Heart right ventricle (tissue), 16 donors: ENCODE measurements at regions of chr7 and their contacts with region 1.

Region 1: DNA sequence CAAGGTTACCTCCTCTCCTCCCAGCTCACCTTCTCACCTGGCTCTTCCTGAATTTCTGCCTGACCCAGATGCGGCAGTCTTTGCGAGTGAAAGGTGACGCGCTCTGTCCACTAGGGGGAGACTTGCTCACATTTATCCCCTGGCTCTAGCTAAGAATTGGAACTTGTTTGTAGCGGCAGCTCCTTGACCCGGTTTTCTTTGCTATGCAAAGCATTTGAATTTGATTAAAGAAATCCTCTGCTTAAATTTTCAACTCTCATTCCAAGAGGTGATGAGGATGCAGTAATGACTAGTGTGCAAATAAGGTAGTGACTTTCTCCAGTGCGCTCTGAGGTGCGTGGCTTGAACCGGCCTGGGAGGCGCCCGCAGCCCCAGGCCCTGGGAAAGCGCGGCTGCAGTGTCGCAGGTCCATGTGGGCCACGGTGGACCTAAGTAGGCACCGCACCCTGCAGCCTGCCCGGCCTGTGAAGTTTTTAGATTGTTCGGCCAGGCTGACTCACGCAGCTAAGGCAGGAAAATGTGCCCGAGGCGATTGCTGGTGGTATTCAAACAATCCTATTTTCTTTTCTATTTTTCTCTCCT is 336.9 kb upstream of the NPSR1 start:
- DNase-seq: peak; percentile 11 to 27
- ATAC-seq: peak; percentile 58 to 85 (median 72)
- H3K4me3 ChIP-seq: peak overlapping the region in 6 of 10 donors; percentile 7 to 28 (median 18)
- H3K27ac ChIP-seq: no peak overlapping the region
- H3K4me1 ChIP-seq: peaks cover 0 to 6% (median 0%) of the 10 kb centered on the region in 9 donors
- H3K27me3 ChIP-seq: peaks cover 0 to 17% (median 0%) of the 10 kb centered on the region in 7 donors
- CTCF ChIP-seq: peak; percentile 47 to 86 (median 79)

Region 2: DNA sequence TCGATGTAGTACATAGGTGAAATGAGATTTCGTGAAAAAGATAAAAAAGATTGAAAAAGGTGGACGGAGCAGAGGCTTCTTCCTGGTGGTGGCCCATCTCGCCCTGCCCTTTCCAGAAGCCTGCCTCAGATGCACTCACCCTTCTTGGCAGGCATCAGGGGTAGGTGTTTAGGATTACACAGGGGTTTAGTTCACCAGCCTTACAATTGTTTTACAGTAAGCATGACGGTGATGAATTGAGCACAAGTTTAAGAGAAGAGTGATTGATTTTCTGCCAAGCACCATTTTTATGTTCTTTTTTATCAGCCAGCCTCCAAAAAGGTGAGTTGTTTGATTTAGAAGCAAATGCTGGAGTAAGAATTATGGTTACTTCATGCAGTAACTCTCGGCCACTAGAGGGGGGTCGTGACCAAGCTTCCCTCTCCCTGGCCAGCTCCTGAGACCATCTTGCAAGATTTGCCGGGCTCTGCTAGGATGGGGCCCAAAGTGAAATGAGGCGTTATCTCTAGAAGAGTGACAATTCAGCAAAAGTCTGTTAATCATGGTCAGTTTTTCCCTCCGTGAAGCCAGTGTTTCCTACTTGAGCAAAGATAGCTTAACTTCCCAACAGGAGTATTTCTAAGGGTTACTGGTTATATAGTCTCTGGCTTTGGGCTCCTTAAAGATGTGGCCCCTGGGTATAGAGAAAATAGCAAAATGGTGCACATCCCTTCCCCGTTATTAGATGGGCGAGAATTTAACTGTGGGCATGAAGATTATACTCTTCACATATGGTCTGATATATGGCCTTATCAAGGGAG is 186.9 kb before region 1 on chr7:
- intact Hi-C with region 1: loop called in 1 of 10 experiments (anchors 5 kb)
- DNase-seq: peak; percentile 55 to 56
- ATAC-seq: peak in 7 of 8 donors; percentile 61 to 75 (median 66)
- H3K4me3 ChIP-seq: no peak overlapping the region
- H3K27ac ChIP-seq: no peak overlapping the region
- H3K4me1 ChIP-seq: peaks cover 0 to 3% (median 0%) of the 10 kb centered on the region in 9 donors
- H3K27me3 ChIP-seq: no peaks in the 10 kb centered on the region
- CTCF ChIP-seq: peak; percentile 40 to 74 (median 69)

Region 3: GRCh38 chr7:34260279-34260678 is 60.8 kb before region 1 on chr7:
- intact Hi-C with region 1: no loop called
- DNase-seq: no peak
- ATAC-seq: peak in 2 of 8 donors; percentile 46 to 92
- H3K4me3 ChIP-seq: no peak overlapping the region
- H3K27ac ChIP-seq: no peak overlapping the region
- H3K4me1 ChIP-seq: no peaks in the 10 kb centered on the region
- H3K27me3 ChIP-seq: no peaks in the 10 kb centered on the region
- CTCF ChIP-seq: no peak

Region 4: DNA sequence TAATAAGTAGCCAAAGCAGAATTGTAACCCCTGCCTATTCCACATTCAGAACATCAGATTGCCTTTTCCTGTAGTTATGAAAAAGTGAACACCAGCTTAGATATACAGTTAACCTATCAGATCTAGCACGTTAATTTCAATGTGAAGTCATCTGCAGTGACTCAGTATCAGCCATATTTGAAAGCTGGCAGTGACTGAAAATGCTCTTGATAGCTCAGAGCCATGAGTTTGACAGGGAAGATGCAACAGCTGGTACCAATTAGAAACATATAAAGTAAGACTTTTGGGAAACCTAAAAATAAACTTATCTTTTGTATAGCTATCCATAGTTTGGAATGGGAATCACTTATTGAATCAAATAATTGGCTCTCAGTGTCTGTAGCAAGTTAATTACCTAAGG is 52.8 kb after region 1 on chr7:
- intact Hi-C with region 1: no loop called
- DNase-seq: no peak
- ATAC-seq: no peak
- H3K4me3 ChIP-seq: no peak overlapping the region
- H3K27ac ChIP-seq: no peak overlapping the region
- H3K4me1 ChIP-seq: no peaks in the 10 kb centered on the region
- H3K27me3 ChIP-seq: no peaks in the 10 kb centered on the region
- CTCF ChIP-seq: no peak

Region 5: GRCh38 chr7:34425187-34425586 is 104.1 kb after region 1 on chr7:
- intact Hi-C with region 1: loop called in 4 of 10 experiments (anchors 5 to 10 kb)
- DNase-seq: no peak
- ATAC-seq: no peak
- H3K4me3 ChIP-seq: no peak overlapping the region
- H3K27ac ChIP-seq: no peak overlapping the region
- H3K4me1 ChIP-seq: no peaks in the 10 kb centered on the region
- H3K27me3 ChIP-seq: peaks cover 0 to 7% (median 0%) of the 10 kb centered on the region in 7 donors
- CTCF ChIP-seq: no peak

Region 6: DNA sequence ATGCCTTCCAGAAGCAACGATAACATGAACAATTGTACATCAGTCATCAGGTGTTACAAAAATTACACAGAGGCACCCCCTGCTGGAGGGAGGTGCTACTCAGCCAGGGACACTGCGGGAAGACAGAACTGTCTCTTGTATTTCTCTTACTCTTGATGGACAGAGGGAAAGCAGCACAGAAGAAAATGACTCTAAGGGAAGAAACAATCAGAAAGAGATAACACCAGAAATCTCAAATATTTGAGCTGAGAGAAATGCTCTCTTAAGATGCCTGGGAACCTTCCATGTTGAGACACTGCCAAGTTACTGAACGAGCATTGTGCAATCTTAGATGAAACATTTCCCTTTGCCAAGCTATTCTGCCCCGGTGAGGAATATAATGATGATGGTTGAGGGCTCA is 109.4 kb after region 1 on chr7:
- intact Hi-C with region 1: loop called in 4 of 10 experiments (anchors 5 to 10 kb)
- DNase-seq: peak in 1 of 2 donors; percentile 23
- ATAC-seq: peak in 1 of 8 donors; percentile 35
- H3K4me3 ChIP-seq: no peak overlapping the region
- H3K27ac ChIP-seq: no peak overlapping the region
- H3K4me1 ChIP-seq: no peaks in the 10 kb centered on the region
- H3K27me3 ChIP-seq: peaks cover 0 to 3% (median 0%) of the 10 kb centered on the region in 7 donors
- CTCF ChIP-seq: peak in 7 of 9 donors; percentile 5 to 54 (median 43)

Region 7: DNA sequence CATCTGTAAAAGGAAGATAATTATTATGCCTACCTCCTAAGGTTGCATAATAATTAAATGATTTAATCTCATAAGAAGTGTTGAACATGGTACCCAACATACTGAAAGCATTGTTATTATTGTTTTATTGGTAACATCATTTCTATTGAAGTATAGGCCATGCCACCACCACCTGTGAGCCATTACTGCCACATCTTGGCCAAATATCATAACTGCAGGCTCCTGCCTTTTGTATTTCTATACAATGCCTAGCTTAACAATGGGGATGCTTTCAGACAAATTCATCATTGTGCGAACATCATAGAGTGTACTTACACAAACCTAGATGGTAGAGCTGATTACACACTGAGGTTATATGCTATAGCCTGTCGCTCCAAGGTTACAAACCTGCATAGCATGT is 275.8 kb after region 1 on chr7:
- intact Hi-C with region 1: loop called in 6 of 10 experiments (anchors 5 to 10 kb)
- DNase-seq: no peak
- ATAC-seq: no peak
- H3K4me3 ChIP-seq: no peak overlapping the region
- H3K27ac ChIP-seq: no peak overlapping the region
- H3K4me1 ChIP-seq: no peaks in the 10 kb centered on the region
- H3K27me3 ChIP-seq: no peaks in the 10 kb centered on the region
- CTCF ChIP-seq: peak in 7 of 9 donors; percentile 25 to 52 (median 38)